Naive thymus-derived CD4-positive, alpha-beta T cell (primary cell): ENCODE measurements at regions of chr14 and their contacts with region 1.

Region 1: DNA sequence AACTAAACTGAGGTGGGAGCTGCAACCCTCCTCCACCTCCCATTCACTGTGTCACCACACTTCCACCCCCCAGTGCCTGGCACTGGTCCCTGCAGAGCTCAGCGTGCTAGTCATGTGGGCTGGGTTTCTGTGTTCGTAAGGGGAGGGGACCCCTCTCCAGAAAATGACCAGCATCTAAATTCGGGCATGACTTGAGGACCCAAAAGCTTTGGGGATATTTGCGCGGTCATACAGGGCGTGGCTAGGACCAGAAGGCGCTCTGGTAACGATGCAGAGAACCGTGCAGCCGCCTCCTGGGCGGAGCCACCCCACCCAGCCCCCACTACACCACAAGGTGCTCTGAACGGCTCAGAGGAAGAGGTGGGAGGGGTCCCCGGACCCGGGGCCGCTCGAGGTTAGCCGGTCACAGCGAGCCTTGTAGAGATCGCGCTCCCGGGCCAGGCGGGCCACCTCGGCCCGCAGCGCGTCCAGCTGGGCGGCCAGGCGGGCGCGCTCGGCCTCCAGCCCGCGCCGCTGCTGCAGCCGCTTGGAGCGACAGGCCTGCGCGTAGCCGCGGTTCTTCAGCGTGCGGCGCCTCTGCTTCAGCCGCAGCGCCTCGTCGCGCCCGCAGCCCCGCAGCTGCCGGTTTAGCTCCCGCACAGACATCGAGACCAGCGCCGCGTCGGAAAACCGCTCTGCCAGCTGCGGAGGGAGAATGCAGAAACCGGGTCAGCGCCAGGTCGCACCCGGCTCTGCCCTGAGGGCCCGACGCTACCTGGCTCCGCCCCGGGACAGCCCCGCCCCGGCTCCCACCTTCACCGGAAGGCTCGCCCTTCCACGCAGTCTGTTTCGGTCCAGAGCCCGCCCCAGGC is 9.8 kb downstream of the CPNE6 start:
- DNase-seq: peak; percentile 46 to 75 (median 72)
- ATAC-seq: peak; percentile 92
- H3K4me3 ChIP-seq: peak overlapping the region; percentile 82
- H3K4me3 Mint-ChIP-seq: peak overlapping the region; percentile 80 to 90 (median 86)
- H3K27ac ChIP-seq: peak overlapping the region; percentile 75
- H3K27ac Mint-ChIP-seq: peak overlapping the region; percentile 32 to 92 (median 85)
- H3K4me1 ChIP-seq: peaks cover 7 to 14% of the 10 kb centered on the region in 2 donors
- H3K4me1 Mint-ChIP-seq: peaks cover 16 to 20% (median 18%) of the 10 kb centered on the region in 7 donors
- H3K27me3 ChIP-seq: no peaks in the 10 kb centered on the region
- H3K27me3 Mint-ChIP-seq: peaks cover 0 to 20% (median 0%) of the 10 kb centered on the region in 5 donors

Region 2: GRCh38 chr14:23929822-23930294 is 151.3 kb before region 1 on chr14:
- CTCF ChIA-PET with region 1: no interaction called
- POLR2A ChIA-PET with region 1: no interaction called
- intact Hi-C with region 1: no loop called
- DNase-seq: peak; percentile 54 to 81 (median 71)
- ATAC-seq: peak; percentile 92
- H3K4me3 ChIP-seq: no peak overlapping the region
- H3K4me3 Mint-ChIP-seq: no peak overlapping the region
- H3K27ac ChIP-seq: no peak overlapping the region
- H3K27ac Mint-ChIP-seq: no peak overlapping the region
- H3K4me1 ChIP-seq: no peaks in the 10 kb centered on the region
- H3K4me1 Mint-ChIP-seq: no peaks in the 10 kb centered on the region
- H3K27me3 ChIP-seq: no peaks in the 10 kb centered on the region
- H3K27me3 Mint-ChIP-seq: peaks cover 0 to 8% (median 0%) of the 10 kb centered on the region in 5 donors

Region 3: DNA sequence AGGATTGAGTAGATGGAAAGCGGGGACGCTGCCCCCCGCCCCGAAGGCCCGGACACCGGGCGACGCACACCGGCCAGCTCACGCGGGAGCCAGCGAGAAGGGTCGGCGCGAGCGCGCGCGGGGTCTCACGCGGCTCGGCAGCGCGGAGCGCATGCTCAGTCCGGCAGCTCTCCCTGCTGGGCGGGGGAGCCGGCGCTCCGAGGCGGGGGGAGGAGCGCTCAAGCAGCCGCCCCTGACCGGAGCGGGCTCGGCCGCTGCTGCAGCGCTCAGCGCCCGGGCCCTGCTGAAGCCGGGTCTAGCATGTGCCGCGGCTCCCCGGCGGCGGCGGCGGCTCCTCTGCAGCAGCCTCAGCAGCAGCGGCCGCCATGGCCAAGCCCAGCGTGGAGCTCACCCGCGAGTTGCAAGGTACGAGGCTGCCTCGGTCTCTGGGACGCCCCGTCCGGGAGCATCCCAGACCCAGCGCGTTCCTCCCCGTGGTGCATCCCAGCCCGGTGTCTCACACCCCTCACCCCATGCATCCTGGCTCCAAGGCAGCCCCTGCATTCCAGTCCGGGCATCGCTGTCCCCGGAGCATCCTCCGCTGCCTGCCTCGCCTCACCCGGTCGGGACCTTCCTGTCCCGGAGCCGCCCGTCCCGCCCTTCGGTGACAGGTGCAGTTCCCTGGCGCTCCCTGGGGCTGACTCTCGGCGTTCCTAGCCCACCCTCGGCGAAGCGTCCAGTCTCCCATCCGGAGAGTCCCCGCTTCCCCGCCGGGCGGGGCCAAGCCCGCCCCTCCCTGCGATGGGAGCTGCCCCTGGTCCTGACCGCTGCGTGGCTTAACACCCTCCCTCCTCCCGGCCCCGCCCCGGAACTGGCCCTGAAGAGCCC is 29.1 kb before region 1 on chr14 and contains the start of gene CARMIL3:
- CTCF ChIA-PET with region 1: interaction called, 32 read pairs
- POLR2A ChIA-PET with region 1: interaction called, 11 read pairs
- intact Hi-C with region 1: no loop called
- DNase-seq: peak; percentile 28 to 78 (median 47)
- ATAC-seq: peak; percentile 79
- H3K4me3 ChIP-seq: peak within 1 kb of the TSS; percentile 63
- H3K4me3 Mint-ChIP-seq: peak within 1 kb of the TSS; percentile 81 to 91 (median 87)
- H3K27ac ChIP-seq: peak within 1 kb of the TSS; percentile 53
- H3K27ac Mint-ChIP-seq: peak within 1 kb of the TSS in 6 of 9 donors; percentile 46 to 67 (median 56)
- H3K4me1 ChIP-seq: peaks cover 0 to 8% of the 10 kb centered on the region in 2 donors
- H3K4me1 Mint-ChIP-seq: peaks cover 8 to 17% (median 14%) of the 10 kb centered on the region in 7 donors
- H3K27me3 ChIP-seq: no peaks in the 10 kb centered on the region
- H3K27me3 Mint-ChIP-seq: peaks cover 12 to 44% (median 19%) of the 10 kb centered on the region in 5 donors
- total RNA-seq, gene CARMIL3: 0.08 to 1.7 (median 0.27) TPM

Region 4: GRCh38 chr14:24058260-24058950 is 22.7 kb before region 1 on chr14:
- CTCF ChIA-PET with region 1: interaction called, 32 read pairs
- POLR2A ChIA-PET with region 1: interaction called, 16 read pairs
- intact Hi-C with region 1: no loop called
- DNase-seq: peak; percentile 22 to 70 (median 49)
- ATAC-seq: peak; percentile 84
- H3K4me3 ChIP-seq: no peak overlapping the region
- H3K4me3 Mint-ChIP-seq: no peak overlapping the region
- H3K27ac ChIP-seq: no peak overlapping the region
- H3K27ac Mint-ChIP-seq: peak overlapping the region in 5 of 9 donors; percentile 22 to 80 (median 67)
- H3K4me1 ChIP-seq: no peaks in the 10 kb centered on the region
- H3K4me1 Mint-ChIP-seq: peaks cover 0 to 8% (median 2%) of the 10 kb centered on the region in 7 donors
- H3K27me3 ChIP-seq: no peaks in the 10 kb centered on the region
- H3K27me3 Mint-ChIP-seq: peaks cover 0 to 8% (median 2%) of the 10 kb centered on the region in 5 donors

Region 5: GRCh38 chr14:24141097-24141880 is 60.2 kb after region 1 on chr14 and contains the start of gene EMC9:
- CTCF ChIA-PET with region 1: no interaction called
- POLR2A ChIA-PET with region 1: interaction called, 9 read pairs
- intact Hi-C with region 1: loop called in 1 of 2 experiments (anchors 1 kb)
- DNase-seq: peak; percentile 90 to 100 (median 99)
- ATAC-seq: peak; percentile 94
- H3K4me3 ChIP-seq: peak within 1 kb of the TSS; percentile 87
- H3K4me3 Mint-ChIP-seq: peak within 1 kb of the TSS; percentile 85 to 100 (median 94)
- H3K27ac ChIP-seq: peak within 1 kb of the TSS; percentile 83
- H3K27ac Mint-ChIP-seq: peak within 1 kb of the TSS; percentile 83 to 96 (median 93)
- H3K4me1 ChIP-seq: peaks cover 33 to 43% of the 10 kb centered on the region in 2 donors
- H3K4me1 Mint-ChIP-seq: peaks cover 47 to 87% (median 77%) of the 10 kb centered on the region in 7 donors
- H3K27me3 ChIP-seq: no peaks in the 10 kb centered on the region
- H3K27me3 Mint-ChIP-seq: no peaks in the 10 kb centered on the region
- total RNA-seq, gene EMC9: 9.0 to 25.5 (median 22.3) TPM

Region 6: GRCh38 chr14:24473211-24473610 is 392.1 kb after region 1 on chr14:
- CTCF ChIA-PET with region 1: no interaction called
- POLR2A ChIA-PET with region 1: no interaction called
- intact Hi-C with region 1: no loop called
- DNase-seq: no peak
- ATAC-seq: no peak
- H3K4me3 ChIP-seq: no peak overlapping the region
- H3K4me3 Mint-ChIP-seq: no peak overlapping the region
- H3K27ac ChIP-seq: no peak overlapping the region
- H3K27ac Mint-ChIP-seq: no peak overlapping the region
- H3K4me1 ChIP-seq: no peaks in the 10 kb centered on the region
- H3K4me1 Mint-ChIP-seq: peaks cover 0 to 1% (median 0%) of the 10 kb centered on the region in 7 donors
- H3K27me3 ChIP-seq: no peaks in the 10 kb centered on the region
- H3K27me3 Mint-ChIP-seq: peaks cover 0 to 4% (median 0%) of the 10 kb centered on the region in 5 donors